Esophagus muscularis mucosa (tissue), 4 donors: ENCODE measurements at regions of chr22 and their contacts with region 1.

Region 1: DNA sequence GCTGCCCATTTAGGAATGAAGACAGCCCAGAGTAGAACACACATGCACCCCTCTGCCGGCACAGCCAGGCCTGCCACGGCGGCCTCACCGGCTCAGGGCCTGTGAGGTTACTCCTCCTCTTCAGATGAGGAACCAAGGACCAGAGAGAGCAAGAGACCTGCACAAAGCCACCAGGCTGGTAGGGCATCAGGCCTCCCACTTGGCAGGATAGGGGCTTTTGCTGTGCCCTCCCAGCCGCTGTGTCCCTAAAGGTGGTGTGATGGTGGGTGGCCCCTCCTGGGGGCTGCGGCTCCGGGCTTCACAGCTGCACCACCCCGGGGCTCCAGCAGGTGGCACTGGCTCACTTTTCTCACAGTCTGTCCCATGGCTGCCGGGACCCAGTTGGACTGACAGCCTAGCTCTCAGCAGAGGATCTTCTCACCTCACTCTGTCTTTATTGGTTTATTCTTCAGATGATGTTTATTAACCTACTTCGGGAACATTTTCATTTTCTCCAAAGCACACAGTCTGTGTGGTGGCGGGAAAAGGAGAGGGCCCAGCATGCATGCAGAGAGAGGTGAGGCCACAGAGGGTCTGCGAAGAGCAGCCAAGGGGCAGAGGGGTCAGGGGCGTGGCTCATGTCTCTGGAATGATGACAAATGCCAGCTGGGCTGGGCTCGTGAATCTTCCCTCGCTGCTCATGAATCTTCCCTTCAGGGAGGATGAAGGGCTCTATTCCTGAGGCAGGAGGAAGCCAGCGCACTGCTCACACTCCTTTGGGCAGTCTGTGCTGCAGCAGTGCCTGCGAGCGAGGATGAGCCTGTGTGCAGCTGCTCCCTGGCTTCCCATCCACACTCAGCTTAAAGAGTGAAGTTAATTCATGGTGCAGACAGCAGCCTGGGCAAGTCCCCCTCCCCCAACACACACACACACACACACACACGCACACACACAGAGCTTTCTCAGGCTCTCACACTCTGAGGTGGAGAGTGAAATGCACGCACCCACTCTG is 101.1 kb upstream of the PITPNB start:
- DNase-seq: no peak
- H3K4me3 ChIP-seq: peak overlapping the region in 2 of 4 donors; percentile 34 to 37
- H3K27ac ChIP-seq: peak overlapping the region in 2 of 4 donors; percentile 55 to 62
- H3K4me1 ChIP-seq: peaks cover 19 to 34% (median 22%) of the 10 kb centered on the region in 4 donors
- H3K27me3 ChIP-seq: no peaks in the 10 kb centered on the region
- CTCF ChIP-seq: peak; percentile 93 to 99 (median 98)
- EP300 ChIP-seq: no peak
- POLR2A ChIP-seq: no peak

Region 2: DNA sequence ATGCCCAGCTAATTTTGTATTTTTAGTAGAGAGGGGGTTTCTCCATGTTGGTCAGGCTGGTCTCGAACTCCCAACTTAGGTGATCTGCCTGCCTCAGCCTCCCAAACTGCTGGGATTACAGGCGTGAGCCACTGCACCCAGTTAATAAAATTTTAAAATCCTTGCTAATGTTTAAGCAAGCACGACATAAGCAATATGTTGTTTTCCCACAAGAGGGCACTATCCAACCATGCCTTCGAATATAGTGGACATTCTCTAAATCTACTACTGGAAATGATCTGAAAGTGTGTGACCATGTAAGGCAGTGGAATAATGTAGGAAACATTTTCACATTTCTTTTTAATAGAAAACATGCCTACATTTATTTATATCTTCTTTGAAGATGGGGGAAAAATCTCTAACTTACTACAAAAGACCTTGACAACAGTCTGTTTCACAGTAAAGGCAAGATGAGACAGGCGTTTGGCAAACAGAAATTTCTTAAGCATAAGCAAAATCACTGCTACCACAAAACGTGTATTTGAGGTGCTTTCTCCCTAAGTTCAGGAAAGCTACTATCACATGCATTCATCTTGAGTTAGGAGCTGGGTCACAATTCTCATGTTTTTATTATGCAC is 139.3 kb before region 1 on chr22:
- intact Hi-C with region 1: no loop called
- DNase-seq: no peak
- H3K4me3 ChIP-seq: peak overlapping the region in 3 of 4 donors; percentile 0 to 8 (median 8)
- H3K27ac ChIP-seq: peak overlapping the region; percentile 82 to 85 (median 84)
- H3K4me1 ChIP-seq: peaks cover 63 to 97% (median 95%) of the 10 kb centered on the region in 4 donors
- H3K27me3 ChIP-seq: no peaks in the 10 kb centered on the region
- CTCF ChIP-seq: peak; percentile 87 to 91 (median 87)
- EP300 ChIP-seq: no peak
- POLR2A ChIP-seq: no peak

Region 3: GRCh38 chr22:28442264-28442710 is 422.1 kb after region 1 on chr22:
- intact Hi-C with region 1: loop called (anchors 10 kb)
- DNase-seq: peak; percentile 93
- H3K4me3 ChIP-seq: peak overlapping the region; percentile 58 to 62 (median 61)
- H3K27ac ChIP-seq: peak overlapping the region; percentile 68 to 82 (median 72)
- H3K4me1 ChIP-seq: peaks cover 12 to 44% (median 40%) of the 10 kb centered on the region in 4 donors
- H3K27me3 ChIP-seq: no peaks in the 10 kb centered on the region
- CTCF ChIP-seq: peak; percentile 62 to 69 (median 67)
- EP300 ChIP-seq: no peak
- POLR2A ChIP-seq: no peak

Region 4: GRCh38 chr22:28594797-28595462 is 574.8 kb after region 1 on chr22:
- intact Hi-C with region 1: loop called (anchors 2 kb)
- DNase-seq: no peak
- H3K4me3 ChIP-seq: no peak overlapping the region
- H3K27ac ChIP-seq: no peak overlapping the region
- H3K4me1 ChIP-seq: peaks cover 0 to 10% (median 8%) of the 10 kb centered on the region in 4 donors
- H3K27me3 ChIP-seq: no peaks in the 10 kb centered on the region
- CTCF ChIP-seq: peak; percentile 73 to 85 (median 79)
- EP300 ChIP-seq: no peak
- POLR2A ChIP-seq: no peak

Region 5: DNA sequence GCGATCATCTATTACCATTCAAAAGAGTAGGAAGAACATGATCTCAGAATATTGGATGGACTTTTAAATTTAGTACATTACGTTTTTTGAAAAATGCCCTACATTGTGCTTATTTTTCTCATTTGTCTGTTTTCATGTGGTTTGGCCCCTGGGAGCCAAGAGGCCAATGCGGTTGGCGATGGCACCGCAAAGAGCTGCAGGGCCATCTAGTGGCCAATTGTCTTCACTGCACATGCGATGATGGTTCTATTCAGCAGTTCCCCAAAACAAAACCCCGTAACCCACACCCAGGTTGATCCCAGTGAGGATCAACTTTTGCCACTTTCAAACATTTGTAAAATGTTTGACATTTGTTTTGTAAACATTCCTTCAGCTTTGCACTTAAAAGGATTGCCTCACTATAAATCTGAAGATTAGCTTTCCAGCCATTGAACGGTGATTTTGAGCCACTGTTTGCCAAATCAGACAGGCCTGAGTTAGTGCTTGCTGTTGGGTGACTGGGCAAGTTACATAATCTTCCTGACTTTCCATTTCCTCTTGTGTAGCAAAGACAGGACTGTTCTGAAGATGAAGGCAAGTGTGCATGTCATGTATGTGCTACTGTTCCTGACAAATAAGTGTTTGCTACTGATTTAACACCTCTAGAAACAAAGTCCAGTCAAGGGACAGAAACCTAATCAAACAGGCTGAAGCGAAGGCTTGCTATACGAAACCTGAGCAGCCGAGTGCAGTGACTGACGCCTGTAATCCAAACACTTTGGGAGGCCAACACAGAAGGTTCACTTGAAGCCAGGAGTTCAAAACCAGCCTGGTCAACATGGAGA is 809.4 kb after region 1 on chr22:
- intact Hi-C with region 1: loop called (anchors 10 kb)
- DNase-seq: peak; percentile 93
- H3K4me3 ChIP-seq: no peak overlapping the region
- H3K27ac ChIP-seq: peak overlapping the region in 3 of 4 donors; percentile 5 to 55 (median 9)
- H3K4me1 ChIP-seq: peaks cover 9 to 16% (median 13%) of the 10 kb centered on the region in 4 donors
- H3K27me3 ChIP-seq: no peaks in the 10 kb centered on the region
- CTCF ChIP-seq: peak; percentile 97 to 98 (median 98)
- EP300 ChIP-seq: no peak
- POLR2A ChIP-seq: no peak